ENCODE measurements at regions of chr9 and their contacts with region 1.

Region 1: GRCh38 chr9:32550562-32551433 is 1.3 kb upstream of the SMIM27 start:
- DNase-seq: peak; percentile 98
- H3K4me3 ChIP-seq: peak overlapping the region; percentile 91 to 94
- H3K27ac ChIP-seq: peak overlapping the region; percentile 97 to 98
- H3K4me1 ChIP-seq: peaks cover 0 to 2% of the 10 kb centered on the region in 2 experiments; a peak in 2 of 4 replicates
- H3K27me3 ChIP-seq: no peaks in the 10 kb centered on the region
- CTCF ChIP-seq: no peak
- EP300 ChIP-seq: no peak
- RAD21 ChIP-seq: no peak

Region 2: DNA sequence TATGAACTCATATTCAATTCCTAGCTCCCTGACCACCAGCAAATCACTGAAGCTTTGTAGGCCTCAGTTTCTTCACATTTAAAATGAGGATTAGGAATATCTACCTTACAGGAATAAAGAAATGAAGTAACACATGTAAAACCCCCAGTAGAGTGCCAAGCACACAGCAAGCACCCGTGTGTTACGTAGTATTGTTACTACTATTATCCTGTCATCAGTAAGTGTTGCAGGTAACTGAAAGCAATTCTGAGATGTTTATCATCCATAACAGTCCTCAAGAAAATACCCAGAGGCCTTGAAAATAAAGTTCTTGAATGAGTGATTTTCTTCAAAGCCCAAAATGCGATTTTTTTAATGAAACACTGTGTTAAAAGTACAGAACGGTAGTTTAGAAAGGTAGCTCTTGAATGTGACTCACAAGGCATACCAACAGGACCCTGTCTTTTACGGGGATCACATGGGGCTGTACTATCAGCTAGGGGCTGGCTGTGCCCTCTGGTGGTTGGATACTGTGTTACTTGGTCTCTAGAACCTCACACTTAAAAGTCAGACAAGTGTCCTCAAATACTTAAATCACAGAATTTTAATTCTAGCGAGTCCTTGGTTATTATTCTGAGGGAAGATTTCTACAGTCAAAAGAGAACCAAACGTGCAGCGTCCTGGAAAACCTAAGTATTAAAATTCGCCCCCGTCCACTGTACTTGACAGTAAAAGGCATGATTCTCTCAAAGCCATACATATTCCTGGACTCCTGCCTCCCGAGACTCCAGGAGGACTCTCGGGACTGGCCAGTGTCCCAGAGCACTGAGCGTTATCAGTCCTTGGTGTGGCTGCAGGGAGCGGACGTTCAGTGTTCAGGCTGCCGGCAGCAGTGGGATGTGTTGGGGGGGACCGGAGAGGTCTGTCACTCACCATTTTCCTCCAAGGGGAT is 21.4 kb after region 1 on chr9:
- CTCF ChIA-PET with region 1: interaction called, 21 read pairs
- POLR2A ChIA-PET with region 1: interaction called, 5 read pairs
- DNase-seq: peak; percentile 79
- H3K4me3 ChIP-seq: peak overlapping the region; percentile 86 to 100
- H3K27ac ChIP-seq: peak overlapping the region; percentile 65 to 69
- H3K4me1 ChIP-seq: peaks cover 17 to 18% of the 10 kb centered on the region in 2 experiments; a peak in 3 of 4 replicates
- H3K27me3 ChIP-seq: no peaks in the 10 kb centered on the region
- CTCF ChIP-seq: peak; percentile 79
- EP300 ChIP-seq: no peak
- RAD21 ChIP-seq: peak; percentile 65

Measured in SK-N-SH (cell line).